ENCODE measurements at regions of chr20 and their contacts with region 1.

Region 1: GRCh38 chr20:49982346-49983122 is at the start of gene SNAI1:
- DNase-seq: peak; percentile 96 to 97
- H3K4me3 ChIP-seq: peak within 1 kb of the TSS; percentile 69
- H3K4me3 Mint-ChIP-seq: peak within 1 kb of the TSS; percentile 73
- H3K27ac Mint-ChIP-seq: peak within 1 kb of the TSS; percentile 73
- H3K4me1 ChIP-seq: peaks cover 43% of the 10 kb centered on the region
- H3K4me1 Mint-ChIP-seq: peaks cover 34% of the 10 kb centered on the region
- H3K27me3 ChIP-seq: no peaks in the 10 kb centered on the region
- H3K27me3 Mint-ChIP-seq: no peaks in the 10 kb centered on the region
- CTCF ChIP-seq: peak; percentile 71 to 98
- total RNA-seq, gene SNAI1: 8.9 and 10.9 TPM in 2 replicates

Region 2: GRCh38 chr20:50012282-50013263 is 30.0 kb after region 1 on chr20:
- CTCF ChIA-PET with region 1: interaction called, 28 read pairs
- POLR2A ChIA-PET with region 1: interaction called, 7 read pairs
- intact Hi-C with region 1: no loop called
- DNase-seq: peak; percentile 87 to 95
- H3K4me3 ChIP-seq: no peak overlapping the region
- H3K4me3 Mint-ChIP-seq: no peak overlapping the region
- H3K27ac Mint-ChIP-seq: peak overlapping the region; percentile 68
- H3K4me1 ChIP-seq: peaks cover 44% of the 10 kb centered on the region
- H3K4me1 Mint-ChIP-seq: peaks cover 29% of the 10 kb centered on the region
- H3K27me3 ChIP-seq: no peaks in the 10 kb centered on the region
- H3K27me3 Mint-ChIP-seq: no peaks in the 10 kb centered on the region
- CTCF ChIP-seq: no peak

Region 3: GRCh38 chr20:50070991-50071888 is 88.7 kb after region 1 on chr20:
- CTCF ChIA-PET with region 1: interaction called, 433 read pairs
- POLR2A ChIA-PET with region 1: interaction called, 22 read pairs
- intact Hi-C with region 1: loop called (anchors 1 kb)
- DNase-seq: peak; percentile 94 to 100
- H3K4me3 ChIP-seq: peak overlapping the region; percentile 50
- H3K4me3 Mint-ChIP-seq: peak overlapping the region; percentile 77
- H3K27ac Mint-ChIP-seq: peak overlapping the region; percentile 20
- H3K4me1 ChIP-seq: peaks cover 13% of the 10 kb centered on the region
- H3K4me1 Mint-ChIP-seq: peaks cover 9% of the 10 kb centered on the region
- H3K27me3 ChIP-seq: no peaks in the 10 kb centered on the region
- H3K27me3 Mint-ChIP-seq: no peaks in the 10 kb centered on the region
- CTCF ChIP-seq: peak; percentile 100

Region 4: DNA sequence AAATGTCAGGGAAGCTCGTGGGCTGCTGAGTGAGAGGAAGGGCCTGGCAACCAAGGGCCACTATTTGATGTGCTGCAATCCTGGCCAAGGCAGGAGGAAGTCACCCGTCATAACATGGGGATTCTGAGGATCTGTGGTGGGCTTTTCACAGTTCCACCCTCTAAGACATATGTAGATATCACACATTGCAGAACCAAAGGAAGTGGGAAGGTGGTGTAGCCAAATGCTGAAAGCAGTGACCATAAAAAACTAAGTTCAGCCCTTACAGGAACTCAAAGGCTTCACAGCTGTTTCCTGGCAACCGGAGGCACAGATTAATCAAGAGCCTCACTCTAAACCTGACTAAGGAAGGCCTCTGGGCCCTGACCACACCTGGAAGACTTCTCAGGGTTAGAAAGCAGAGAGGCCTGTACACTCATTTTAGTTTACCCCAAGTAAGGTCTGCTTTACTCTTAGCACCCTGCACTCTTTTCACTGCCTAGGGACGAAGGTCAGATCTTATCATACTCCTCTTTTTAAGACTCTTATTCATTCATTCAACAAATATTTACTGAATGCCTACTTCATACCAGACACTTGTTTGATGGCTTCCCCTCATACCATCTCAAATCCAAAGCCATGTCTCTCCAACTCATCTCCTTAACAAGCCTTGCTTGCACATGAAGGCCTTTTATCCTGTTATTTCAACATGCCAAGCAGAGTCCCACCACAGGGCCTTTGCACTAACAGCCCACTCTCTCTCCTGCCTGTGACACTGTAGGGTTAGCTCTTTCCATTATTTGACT is 127.8 kb after region 1 on chr20:
- CTCF ChIA-PET with region 1: interaction called, 24 read pairs
- POLR2A ChIA-PET with region 1: interaction called, 12 read pairs
- intact Hi-C with region 1: no loop called
- DNase-seq: peak; percentile 80
- H3K4me3 ChIP-seq: no peak overlapping the region
- H3K4me3 Mint-ChIP-seq: peak overlapping the region; percentile 96
- H3K27ac Mint-ChIP-seq: peak overlapping the region; percentile 57
- H3K4me1 ChIP-seq: peaks cover 62% of the 10 kb centered on the region
- H3K4me1 Mint-ChIP-seq: peaks cover 68% of the 10 kb centered on the region
- H3K27me3 ChIP-seq: no peaks in the 10 kb centered on the region
- H3K27me3 Mint-ChIP-seq: no peaks in the 10 kb centered on the region
- CTCF ChIP-seq: no peak

Region 5: GRCh38 chr20:50153485-50154377 is 171.2 kb after region 1 on chr20 and contains the start of gene PEDS1:
- CTCF ChIA-PET with region 1: interaction called, 23 read pairs
- POLR2A ChIA-PET with region 1: no interaction called
- intact Hi-C with region 1: loop called (anchors 5 kb)
- DNase-seq: peak; percentile 95 to 99
- H3K4me3 ChIP-seq: peak within 1 kb of the TSS; percentile 96
- H3K4me3 Mint-ChIP-seq: peak within 1 kb of the TSS; percentile 82
- H3K27ac Mint-ChIP-seq: peak within 1 kb of the TSS; percentile 91
- H3K4me1 ChIP-seq: peaks cover 32% of the 10 kb centered on the region
- H3K4me1 Mint-ChIP-seq: peaks cover 45% of the 10 kb centered on the region
- H3K27me3 ChIP-seq: no peaks in the 10 kb centered on the region
- H3K27me3 Mint-ChIP-seq: no peaks in the 10 kb centered on the region
- CTCF ChIP-seq: peak; percentile 0 to 5
- total RNA-seq, gene PEDS1: 78.3 and 84.1 TPM in 2 replicates

Region 6: GRCh38 chr20:50179507-50180016 is 197.0 kb after region 1 on chr20:
- CTCF ChIA-PET with region 1: interaction called, 15 read pairs
- POLR2A ChIA-PET with region 1: no interaction called
- intact Hi-C with region 1: no loop called
- DNase-seq: no peak
- H3K4me3 ChIP-seq: no peak overlapping the region
- H3K4me3 Mint-ChIP-seq: no peak overlapping the region
- H3K27ac Mint-ChIP-seq: peak overlapping the region; percentile 14
- H3K4me1 ChIP-seq: no peaks in the 10 kb centered on the region
- H3K4me1 Mint-ChIP-seq: peaks cover 7% of the 10 kb centered on the region
- H3K27me3 ChIP-seq: no peaks in the 10 kb centered on the region
- H3K27me3 Mint-ChIP-seq: no peaks in the 10 kb centered on the region
- CTCF ChIP-seq: peak in 1 of 2 experiments; percentile 50

Region 7: GRCh38 chr20:50224531-50225255 is 242.2 kb after region 1 on chr20:
- CTCF ChIA-PET with region 1: no interaction called
- POLR2A ChIA-PET with region 1: no interaction called
- intact Hi-C with region 1: no loop called
- DNase-seq: peak in 1 of 2 experiments; percentile 47
- H3K4me3 ChIP-seq: no peak overlapping the region
- H3K4me3 Mint-ChIP-seq: no peak overlapping the region
- H3K27ac Mint-ChIP-seq: peak overlapping the region; percentile 26
- H3K4me1 ChIP-seq: peaks cover 13% of the 10 kb centered on the region
- H3K4me1 Mint-ChIP-seq: peaks cover 23% of the 10 kb centered on the region
- H3K27me3 ChIP-seq: no peaks in the 10 kb centered on the region
- H3K27me3 Mint-ChIP-seq: no peaks in the 10 kb centered on the region
- CTCF ChIP-seq: peak; percentile 14 to 16

Measured in Caco-2 (cell line).